Activated CD4-positive, alpha-beta T cell treated with anti-CD3 and anti-CD28 coated beads, Interleukin-2, amount 10 ng/mL, durations not matched to agents 24 days and 14 days (primary cell): ENCODE measurements at regions of chr11 and their contacts with region 1.

Region 1: DNA sequence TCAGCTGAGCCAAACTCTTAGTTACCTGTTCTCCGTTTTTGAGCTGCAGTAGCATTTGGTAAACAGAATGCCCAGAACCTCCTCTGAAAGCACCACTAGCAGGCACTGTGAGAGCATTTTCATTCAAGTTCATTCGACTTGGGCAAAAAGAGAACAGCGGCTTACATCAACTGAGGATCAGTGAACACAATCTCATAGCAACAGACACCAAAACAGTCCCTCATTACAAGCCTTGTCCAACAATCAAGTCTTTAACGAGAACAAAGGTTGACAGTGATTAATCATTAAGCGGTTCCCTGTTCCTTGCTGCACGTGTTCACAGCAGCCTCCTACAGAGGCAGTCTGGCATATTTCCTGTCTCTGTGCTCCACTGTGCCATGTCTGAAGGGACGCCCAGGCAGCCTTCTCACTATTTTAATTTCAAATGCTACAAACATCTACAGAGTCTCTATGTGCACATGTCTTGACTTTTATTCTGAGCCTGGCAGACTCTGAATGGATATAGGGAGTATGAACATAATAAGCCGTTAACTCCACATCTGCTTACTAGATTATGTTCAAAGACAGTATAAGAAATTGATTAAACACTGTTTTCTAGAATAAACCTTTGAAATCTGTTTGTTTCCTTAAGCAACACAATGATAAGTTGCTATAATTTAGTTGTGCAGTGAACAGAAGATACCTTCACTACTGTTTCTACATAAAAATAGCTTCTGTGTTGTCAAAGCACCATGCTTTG is 88.3 kb upstream of the MTMR2 start:
- DNase-seq: peak; percentile 82
- H3K4me3 Mint-ChIP-seq: peak overlapping the region; percentile 52
- H3K27ac Mint-ChIP-seq: peak overlapping the region; percentile 79
- H3K4me1 Mint-ChIP-seq: peaks cover 49% of the 10 kb centered on the region
- H3K27me3 Mint-ChIP-seq: no peaks in the 10 kb centered on the region

Region 2: DNA sequence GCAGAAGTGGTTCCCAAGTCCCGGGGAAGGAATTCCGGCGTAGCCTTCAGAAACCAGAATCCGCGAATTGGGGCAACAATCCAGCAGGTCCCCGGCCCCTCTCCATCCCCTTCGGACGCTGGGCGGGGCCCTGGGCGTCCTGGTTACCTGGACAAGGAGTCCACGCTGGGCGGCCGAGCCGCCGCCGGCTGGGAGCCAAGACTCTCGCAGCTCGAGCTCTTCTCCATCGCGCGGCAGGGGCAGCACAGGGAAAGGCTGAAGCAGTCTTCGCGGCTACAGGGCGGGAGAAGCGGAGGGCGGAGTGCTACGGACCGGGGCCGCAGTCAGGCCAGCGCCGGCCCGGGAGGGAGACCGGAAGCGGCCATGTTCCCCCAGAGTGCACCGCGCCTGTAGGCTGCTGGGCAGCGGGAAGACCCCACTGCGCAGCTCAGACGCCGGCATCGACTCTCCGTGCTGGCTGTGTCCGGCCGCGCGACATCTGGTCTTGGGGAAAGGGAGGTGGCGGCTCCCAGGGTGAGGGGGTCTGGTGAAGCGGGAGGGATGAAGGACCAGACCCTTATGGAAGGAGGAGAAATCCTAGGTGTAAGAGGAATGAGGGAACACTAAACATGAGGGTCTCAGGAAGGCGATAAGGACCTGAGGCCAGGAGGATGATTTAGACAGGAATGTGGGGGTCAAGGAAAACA is 88.4 kb before region 1 on chr11 and contains the start of gene MTMR2:
- intact Hi-C with region 1: loop called (anchors 5 kb)
- DNase-seq: peak; percentile 86
- H3K4me3 Mint-ChIP-seq: peak within 1 kb of the TSS; percentile 99
- H3K27ac Mint-ChIP-seq: peak within 1 kb of the TSS; percentile 96
- H3K4me1 Mint-ChIP-seq: peaks cover 24% of the 10 kb centered on the region
- H3K27me3 Mint-ChIP-seq: peaks cover 12% of the 10 kb centered on the region
- total RNA-seq, gene MTMR2: 37.5 and 38.4 TPM in 2 replicates

Region 3: GRCh38 chr11:95948637-95949036 is 63.6 kb before region 1 on chr11:
- intact Hi-C with region 1: no loop called
- DNase-seq: no peak
- H3K4me3 Mint-ChIP-seq: no peak overlapping the region
- H3K27ac Mint-ChIP-seq: no peak overlapping the region
- H3K4me1 Mint-ChIP-seq: no peaks in the 10 kb centered on the region
- H3K27me3 Mint-ChIP-seq: no peaks in the 10 kb centered on the region

Region 4: GRCh38 chr11:96044747-96045146 is 32.5 kb after region 1 on chr11:
- intact Hi-C with region 1: no loop called
- DNase-seq: no peak
- H3K4me3 Mint-ChIP-seq: no peak overlapping the region
- H3K27ac Mint-ChIP-seq: no peak overlapping the region
- H3K4me1 Mint-ChIP-seq: peaks cover 9% of the 10 kb centered on the region
- H3K27me3 Mint-ChIP-seq: no peaks in the 10 kb centered on the region

Region 5: DNA sequence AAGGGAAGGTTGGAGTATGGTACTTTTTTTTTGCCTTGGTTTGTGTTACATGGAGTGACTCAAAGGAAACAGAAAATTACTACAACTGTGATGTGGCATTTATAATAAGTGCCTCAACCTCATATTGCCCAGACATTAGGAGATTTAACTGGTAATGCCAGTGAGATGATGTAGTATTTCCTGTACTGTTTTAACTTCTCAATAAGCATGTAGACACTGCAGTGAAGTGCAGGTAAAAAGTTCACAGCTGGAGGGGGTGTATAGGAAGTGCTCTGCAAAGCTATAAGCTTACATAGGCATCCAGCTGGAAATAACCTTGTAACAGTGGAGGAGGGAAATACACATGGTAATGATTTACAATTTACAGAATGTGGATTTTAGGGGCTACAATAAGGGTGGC is 49.9 kb after region 1 on chr11:
- intact Hi-C with region 1: loop called (anchors 5 kb)
- DNase-seq: peak; percentile 70
- H3K4me3 Mint-ChIP-seq: peak overlapping the region; percentile 11
- H3K27ac Mint-ChIP-seq: peak overlapping the region; percentile 86
- H3K4me1 Mint-ChIP-seq: peaks cover 43% of the 10 kb centered on the region
- H3K27me3 Mint-ChIP-seq: no peaks in the 10 kb centered on the region

Region 6: GRCh38 chr11:96188243-96189006 is 176.2 kb after region 1 on chr11:
- intact Hi-C with region 1: loop called (anchors 2 kb)
- DNase-seq: peak; percentile 74
- H3K4me3 Mint-ChIP-seq: peak overlapping the region; percentile 26
- H3K27ac Mint-ChIP-seq: peak overlapping the region; percentile 66
- H3K4me1 Mint-ChIP-seq: peaks cover 52% of the 10 kb centered on the region
- H3K27me3 Mint-ChIP-seq: no peaks in the 10 kb centered on the region

Region 7: DNA sequence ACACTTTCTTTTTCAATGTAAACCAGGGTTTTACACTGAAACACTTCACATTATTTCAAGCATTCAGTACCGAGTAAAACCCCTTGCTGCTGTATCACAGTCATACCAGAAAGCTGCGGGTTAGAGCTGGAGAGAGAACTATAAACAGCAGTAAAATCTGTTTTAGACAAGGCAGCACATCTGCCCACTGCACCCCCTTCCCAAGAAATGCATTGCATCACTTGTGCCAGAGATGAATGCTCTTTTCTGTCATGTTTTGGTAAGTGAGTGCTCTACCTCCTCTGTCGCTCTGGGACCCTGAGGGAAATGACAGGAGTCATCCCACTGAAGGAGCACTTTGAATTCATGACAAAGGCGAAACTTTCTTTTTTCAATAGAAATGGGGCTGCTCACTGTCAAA is 223.5 kb after region 1 on chr11:
- intact Hi-C with region 1: loop called (anchors 1 kb)
- DNase-seq: peak; percentile 86
- H3K4me3 Mint-ChIP-seq: peak overlapping the region; percentile 76
- H3K27ac Mint-ChIP-seq: peak overlapping the region; percentile 95
- H3K4me1 Mint-ChIP-seq: peaks cover 30% of the 10 kb centered on the region
- H3K27me3 Mint-ChIP-seq: no peaks in the 10 kb centered on the region

Region 8: GRCh38 chr11:96389720-96390487 is 377.6 kb after region 1 on chr11 and contains the starts of genes CCDC82 and JRKL:
- intact Hi-C with region 1: loop called (anchors 2 kb)
- DNase-seq: peak; percentile 99
- H3K4me3 Mint-ChIP-seq: peak within 1 kb of the TSS; percentile 93
- H3K27ac Mint-ChIP-seq: peak within 1 kb of the TSS; percentile 96
- H3K4me1 Mint-ChIP-seq: peaks cover 52% of the 10 kb centered on the region
- H3K27me3 Mint-ChIP-seq: no peaks in the 10 kb centered on the region
- total RNA-seq, gene CCDC82: 27.6 and 31.8 TPM in 2 replicates
- total RNA-seq, gene JRKL: 9.9 and 11.9 TPM in 2 replicates